ENCODE measurements at regions of chr5 and their contacts with region 1.

Region 1: GRCh38 chr5:143426437-143426991 is 23.0 kb upstream of the NR3C1 start:
- DNase-seq: no peak
- ATAC-seq: peak; percentile 76
- H3K4me3 ChIP-seq: no peak overlapping the region
- H3K27ac ChIP-seq: peak overlapping the region; percentile 68
- H3K4me1 ChIP-seq: peaks cover 13% of the 10 kb centered on the region; the same call in 1 of the 2 replicates
- H3K27me3 ChIP-seq: no peaks in the 10 kb centered on the region
- CTCF ChIP-seq: no peak
- EP300 ChIP-seq: 0 out of 4 replicates have a peak, but pooled peaks of 1 of the 2 experiments have one; percentile 11
- POLR2A ChIP-seq: no peak
- RAD21 ChIP-seq: no peak

Region 2: DNA sequence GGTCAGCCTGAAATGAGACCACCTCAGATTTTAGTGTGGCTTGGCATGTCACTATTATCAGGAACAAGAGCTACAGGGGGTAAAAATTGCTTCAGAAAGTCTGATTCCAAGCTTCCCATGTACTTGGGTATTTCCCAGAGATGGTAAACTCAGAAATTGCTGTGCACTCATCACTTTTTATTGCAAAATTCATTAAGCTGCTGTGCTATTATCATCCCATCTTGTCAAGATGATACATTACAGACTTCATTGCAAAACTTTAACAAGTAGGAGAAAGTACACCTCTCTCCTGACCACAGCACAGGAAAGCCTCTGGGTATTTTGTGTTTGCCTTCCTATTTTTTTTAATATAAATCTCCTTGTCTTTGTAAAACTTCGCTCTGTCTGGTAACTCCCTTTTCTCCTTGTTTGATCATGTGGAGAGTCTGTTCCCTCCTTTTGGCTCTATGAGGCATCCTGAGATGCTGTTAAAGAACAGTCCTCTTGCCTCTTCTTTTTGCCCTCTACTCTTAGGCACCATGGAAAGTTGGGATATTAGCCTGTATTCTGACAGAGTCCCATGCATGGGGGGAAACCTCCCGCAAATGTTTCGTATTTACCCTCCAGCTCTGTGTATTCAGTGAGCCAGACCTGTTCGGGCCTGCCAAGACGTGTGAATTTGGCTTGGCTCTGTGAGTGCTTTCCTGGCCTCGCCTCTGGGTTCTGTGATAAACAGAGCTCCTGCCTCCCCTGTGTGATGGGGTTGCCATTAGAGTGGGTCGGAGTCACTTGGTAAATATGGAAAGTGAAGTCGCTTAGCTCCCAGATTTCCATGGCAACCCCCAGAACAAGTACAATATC is 283.7 kb before region 1 on chr5:
- CTCF ChIA-PET with region 1: no interaction called
- POLR2A ChIA-PET with region 1: no interaction called
- RAD21 ChIA-PET with region 1: no interaction called
- SMC1A ChIA-PET with region 1: no interaction called
- in situ Hi-C with region 1: no loop called
- intact Hi-C with region 1: no loop called
- DNase-seq: no peak
- ATAC-seq: no peak
- H3K4me3 ChIP-seq: no peak overlapping the region
- H3K27ac ChIP-seq: no peak overlapping the region
- H3K4me1 ChIP-seq: no peaks in the 10 kb centered on the region
- H3K27me3 ChIP-seq: no peaks in the 10 kb centered on the region
- CTCF ChIP-seq: no peak
- EP300 ChIP-seq: no peak
- POLR2A ChIP-seq: no peak
- RAD21 ChIP-seq: no peak

Region 3: GRCh38 chr5:143413958-143414669 is 12.4 kb before region 1 on chr5:
- CTCF ChIA-PET with region 1: interaction called, 49 read pairs
- POLR2A ChIA-PET with region 1: interaction called, 138 read pairs
- RAD21 ChIA-PET with region 1: interaction called, 187 read pairs
- SMC1A ChIA-PET with region 1: interaction called, 260 read pairs
- in situ Hi-C with region 1: no loop called
- intact Hi-C with region 1: no loop called
- DNase-seq: no peak
- ATAC-seq: peak; percentile 71
- H3K4me3 ChIP-seq: peak overlapping the region; percentile 16; the same call in 1 of the 2 replicates
- H3K27ac ChIP-seq: peak overlapping the region; percentile 76
- H3K4me1 ChIP-seq: peaks cover 43% of the 10 kb centered on the region
- H3K27me3 ChIP-seq: no peaks in the 10 kb centered on the region
- CTCF ChIP-seq: no peak
- EP300 ChIP-seq: peak; percentile 21 to 63; a peak in 2 of 4 replicates
- POLR2A ChIP-seq: no peak
- RAD21 ChIP-seq: no peak

Region 4: GRCh38 chr5:144156767-144157171 is 730.3 kb after region 1 on chr5:
- CTCF ChIA-PET with region 1: no interaction called
- POLR2A ChIA-PET with region 1: no interaction called
- RAD21 ChIA-PET with region 1: no interaction called
- SMC1A ChIA-PET with region 1: no interaction called
- in situ Hi-C with region 1: no loop called
- intact Hi-C with region 1: no loop called
- DNase-seq: no peak
- ATAC-seq: 0 out of 3 replicates have a peak, but pooled peaks have one; percentile 20
- H3K4me3 ChIP-seq: no peak overlapping the region
- H3K27ac ChIP-seq: no peak overlapping the region
- H3K4me1 ChIP-seq: no peaks in the 10 kb centered on the region
- H3K27me3 ChIP-seq: no peaks in the 10 kb centered on the region
- CTCF ChIP-seq: no peak
- EP300 ChIP-seq: no peak
- POLR2A ChIP-seq: no peak
- RAD21 ChIP-seq: no peak